Ovary (tissue), 10 donors: ENCODE measurements at regions of chr1 and their contacts with region 1.

Region 1: GRCh38 chr1:172443626-172444453 is at the start of gene PIGC:
- DNase-seq: peak; percentile 89 to 94 (median 91)
- H3K4me3 ChIP-seq: peak within 1 kb of the TSS; percentile 98
- H3K27ac ChIP-seq: peak within 1 kb of the TSS in 1 of 2 donors; percentile 47
- H3K4me1 ChIP-seq: peaks cover 9% of the 10 kb centered on the region
- H3K27me3 ChIP-seq: no peaks in the 10 kb centered on the region
- CTCF ChIP-seq: peak; percentile 65 to 86 (median 78)
- EP300 ChIP-seq: no peak
- POLR2A ChIP-seq: no peak
- total RNA-seq, gene PIGC: 21.1 to 27.9 (median 24.8) TPM

Region 2: DNA sequence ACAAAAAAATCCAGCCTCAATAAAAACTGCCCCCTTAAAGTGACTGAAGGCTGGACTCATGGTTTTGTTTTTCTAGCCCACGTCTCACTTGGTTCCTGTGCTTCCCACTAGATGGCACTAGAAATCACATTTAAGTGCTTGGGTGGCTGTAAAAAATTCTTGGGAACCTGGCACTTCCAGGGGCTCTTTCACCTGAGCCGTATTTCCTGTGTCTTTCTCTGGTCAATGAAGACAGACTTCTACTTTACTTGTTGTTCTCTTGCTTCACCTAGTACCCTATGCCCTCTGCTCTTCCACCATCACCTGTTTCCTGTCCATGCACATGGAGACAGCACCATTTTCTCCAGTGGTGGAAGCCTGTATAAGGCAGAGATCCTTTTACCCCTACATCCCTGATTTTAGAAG is 642.4 kb before region 1 on chr1:
- intact Hi-C with region 1: loop called in 1 of 4 experiments (anchors 10 kb)
- DNase-seq: peak in 1 of 5 donors; percentile 25
- H3K4me3 ChIP-seq: no peak overlapping the region
- H3K27ac ChIP-seq: no peak overlapping the region
- H3K4me1 ChIP-seq: no peaks in the 10 kb centered on the region
- H3K27me3 ChIP-seq: no peaks in the 10 kb centered on the region
- CTCF ChIP-seq: peak; percentile 35 to 59 (median 45)
- EP300 ChIP-seq: no peak
- POLR2A ChIP-seq: no peak

Region 3: GRCh38 chr1:172041742-172042141 is 402.1 kb before region 1 on chr1:
- intact Hi-C with region 1: loop called in 1 of 4 experiments (anchors 10 kb)
- DNase-seq: peak in 1 of 5 donors; percentile 49
- H3K4me3 ChIP-seq: peak overlapping the region; percentile 17
- H3K27ac ChIP-seq: no peak overlapping the region
- H3K4me1 ChIP-seq: no peaks in the 10 kb centered on the region
- H3K27me3 ChIP-seq: no peaks in the 10 kb centered on the region
- CTCF ChIP-seq: peak in 2 of 3 donors; percentile 78 to 87
- EP300 ChIP-seq: no peak
- POLR2A ChIP-seq: no peak

Region 4: DNA sequence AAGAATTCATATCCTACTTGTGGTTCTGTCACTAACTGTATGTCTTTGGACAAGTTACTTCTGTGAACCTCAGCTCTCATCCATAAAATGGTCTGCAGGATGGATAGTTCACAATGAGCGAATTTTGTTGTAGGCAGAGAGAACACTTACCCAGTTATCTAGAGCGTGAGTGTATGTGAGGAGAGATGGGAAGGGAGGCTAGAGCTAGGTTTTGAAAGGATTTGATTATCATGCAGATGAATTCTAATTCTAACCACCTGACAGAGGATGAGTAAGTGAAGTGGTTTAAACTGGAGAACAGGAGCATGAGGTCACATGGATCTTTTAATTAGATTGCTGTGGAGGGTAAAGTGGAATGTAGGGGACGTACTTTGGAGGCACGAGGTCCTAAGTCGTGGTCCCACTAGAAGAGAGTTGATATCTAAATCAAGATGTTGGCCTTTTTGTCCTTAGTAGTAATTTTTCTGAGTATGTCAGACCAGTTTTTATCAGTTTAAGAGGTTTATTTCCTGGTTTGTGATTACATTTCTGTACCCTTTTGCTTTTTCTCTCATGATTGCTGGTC is 94.1 kb after region 1 on chr1:
- intact Hi-C with region 1: no loop called
- DNase-seq: no peak
- H3K4me3 ChIP-seq: no peak overlapping the region
- H3K27ac ChIP-seq: no peak overlapping the region
- H3K4me1 ChIP-seq: peaks cover 4% of the 10 kb centered on the region
- H3K27me3 ChIP-seq: no peaks in the 10 kb centered on the region
- CTCF ChIP-seq: no peak
- EP300 ChIP-seq: no peak
- POLR2A ChIP-seq: no peak

Region 5: GRCh38 chr1:172719694-172720138 is 275.9 kb after region 1 on chr1:
- intact Hi-C with region 1: loop called in 1 of 4 experiments (anchors 10 kb)
- DNase-seq: no peak
- H3K4me3 ChIP-seq: no peak overlapping the region
- H3K27ac ChIP-seq: no peak overlapping the region
- H3K4me1 ChIP-seq: no peaks in the 10 kb centered on the region
- H3K27me3 ChIP-seq: no peaks in the 10 kb centered on the region
- CTCF ChIP-seq: peak in 1 of 3 donors; percentile 31
- EP300 ChIP-seq: no peak
- POLR2A ChIP-seq: no peak